CD8-positive, alpha-beta memory T cell (primary cell): ENCODE measurements at regions of chr19 and their contacts with region 1.

Region 1: GRCh38 chr19:37906869-37907734 is at the start of gene SIPA1L3:
- DNase-seq: peak; percentile 86 to 93 (median 89)
- H3K4me3 ChIP-seq: peak within 1 kb of the TSS; percentile 99
- H3K4me3 Mint-ChIP-seq: peak within 1 kb of the TSS; percentile 91 to 98 (median 93)
- H3K27ac ChIP-seq: peak within 1 kb of the TSS; percentile 87
- H3K27ac Mint-ChIP-seq: peak within 1 kb of the TSS; percentile 70 to 98 (median 84)
- H3K4me1 ChIP-seq: peaks cover 21% of the 10 kb centered on the region
- H3K4me1 Mint-ChIP-seq: peaks cover 24 to 40% (median 35%) of the 10 kb centered on the region in 3 donors
- H3K27me3 ChIP-seq: no peaks in the 10 kb centered on the region
- H3K27me3 Mint-ChIP-seq: no peaks in the 10 kb centered on the region
- total RNA-seq, gene SIPA1L3: 11.5 to 14.8 TPM

Region 2: GRCh38 chr19:37893845-37894575 is 13.1 kb before region 1 on chr19:
- CTCF ChIA-PET with region 1: interaction called, 10 read pairs
- POLR2A ChIA-PET with region 1: no interaction called
- DNase-seq: no peak
- H3K4me3 ChIP-seq: no peak overlapping the region
- H3K4me3 Mint-ChIP-seq: peak overlapping the region in 1 of 7 donors; percentile 61
- H3K27ac ChIP-seq: no peak overlapping the region
- H3K27ac Mint-ChIP-seq: peak overlapping the region in 1 of 8 donors; percentile 50
- H3K4me1 ChIP-seq: no peaks in the 10 kb centered on the region
- H3K4me1 Mint-ChIP-seq: no peaks in the 10 kb centered on the region
- H3K27me3 ChIP-seq: no peaks in the 10 kb centered on the region
- H3K27me3 Mint-ChIP-seq: peaks cover 17 to 21% of the 10 kb centered on the region in 2 donors

Region 3: GRCh38 chr19:38049105-38049649 is 142.1 kb after region 1 on chr19:
- CTCF ChIA-PET with region 1: interaction called, 12 read pairs
- POLR2A ChIA-PET with region 1: interaction called, 7 read pairs
- DNase-seq: peak in 4 of 5 donors; percentile 26 to 80 (median 74)
- H3K4me3 ChIP-seq: peak overlapping the region; percentile 38
- H3K4me3 Mint-ChIP-seq: peak overlapping the region; percentile 14 to 91 (median 84)
- H3K27ac ChIP-seq: peak overlapping the region; percentile 72
- H3K27ac Mint-ChIP-seq: peak overlapping the region; percentile 95 to 99 (median 98)
- H3K4me1 ChIP-seq: peaks cover 35% of the 10 kb centered on the region
- H3K4me1 Mint-ChIP-seq: peaks cover 23 to 36% (median 36%) of the 10 kb centered on the region in 3 donors
- H3K27me3 ChIP-seq: no peaks in the 10 kb centered on the region
- H3K27me3 Mint-ChIP-seq: no peaks in the 10 kb centered on the region